Panc1 (cell line): ENCODE measurements at regions of chr10 and their contacts with region 1.

Region 1: GRCh38 chr10:36621346-36621745 is 504.1 kb upstream of the ANKRD30A start:
- DNase-seq: no peak
- ATAC-seq: no peak
- H3K4me3 ChIP-seq: no peak overlapping the region
- H3K27ac ChIP-seq: no peak overlapping the region
- H3K4me1 ChIP-seq: no peaks in the 10 kb centered on the region
- H3K27me3 ChIP-seq: no peaks in the 10 kb centered on the region
- CTCF ChIP-seq: no peak

Region 2: GRCh38 chr10:36178616-36179015 is 442.7 kb before region 1 on chr10:
- CTCF ChIA-PET with region 1: no interaction called
- POLR2A ChIA-PET with region 1: interaction called, 12 read pairs
- in situ Hi-C with region 1: no loop called
- intact Hi-C with region 1: no loop called
- DNase-seq: no peak
- ATAC-seq: no peak
- H3K4me3 ChIP-seq: no peak overlapping the region
- H3K27ac ChIP-seq: no peak overlapping the region
- H3K4me1 ChIP-seq: no peaks in the 10 kb centered on the region
- H3K27me3 ChIP-seq: no peaks in the 10 kb centered on the region
- CTCF ChIP-seq: no peak

Region 3: GRCh38 chr10:36602374-36602773 is 19.0 kb before region 1 on chr10:
- CTCF ChIA-PET with region 1: no interaction called
- POLR2A ChIA-PET with region 1: no interaction called
- in situ Hi-C with region 1: no loop called
- intact Hi-C with region 1: no loop called
- DNase-seq: no peak
- ATAC-seq: no peak
- H3K4me3 ChIP-seq: no peak overlapping the region
- H3K27ac ChIP-seq: no peak overlapping the region
- H3K4me1 ChIP-seq: no peaks in the 10 kb centered on the region
- H3K27me3 ChIP-seq: no peaks in the 10 kb centered on the region
- CTCF ChIP-seq: no peak

Region 4: DNA sequence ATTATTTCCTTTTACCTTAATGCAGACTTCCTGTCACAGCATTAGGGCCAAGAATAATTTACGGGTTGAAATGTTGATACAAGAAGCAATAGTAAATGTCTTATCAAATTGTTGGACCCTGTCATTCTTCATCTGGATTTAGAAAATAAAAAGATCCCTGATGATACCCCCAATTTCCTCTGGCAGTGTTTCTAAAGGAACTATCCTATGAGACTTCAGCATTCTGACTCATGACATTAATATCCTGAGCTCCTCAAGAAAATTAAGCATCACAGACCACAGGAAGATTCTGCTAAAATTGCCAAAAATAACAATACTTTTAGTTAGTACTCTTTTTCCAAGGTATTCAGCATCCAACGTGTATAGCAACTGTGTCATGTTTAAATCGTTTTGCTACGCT is 13.6 kb after region 1 on chr10:
- CTCF ChIA-PET with region 1: no interaction called
- POLR2A ChIA-PET with region 1: no interaction called
- in situ Hi-C with region 1: no loop called
- intact Hi-C with region 1: no loop called
- DNase-seq: no peak
- ATAC-seq: no peak
- H3K4me3 ChIP-seq: no peak overlapping the region
- H3K27ac ChIP-seq: no peak overlapping the region
- H3K4me1 ChIP-seq: no peaks in the 10 kb centered on the region
- H3K27me3 ChIP-seq: no peaks in the 10 kb centered on the region
- CTCF ChIP-seq: no peak